PC-9 (cell line): ENCODE measurements at regions of chr2 and their contacts with region 1.

Region 1: DNA sequence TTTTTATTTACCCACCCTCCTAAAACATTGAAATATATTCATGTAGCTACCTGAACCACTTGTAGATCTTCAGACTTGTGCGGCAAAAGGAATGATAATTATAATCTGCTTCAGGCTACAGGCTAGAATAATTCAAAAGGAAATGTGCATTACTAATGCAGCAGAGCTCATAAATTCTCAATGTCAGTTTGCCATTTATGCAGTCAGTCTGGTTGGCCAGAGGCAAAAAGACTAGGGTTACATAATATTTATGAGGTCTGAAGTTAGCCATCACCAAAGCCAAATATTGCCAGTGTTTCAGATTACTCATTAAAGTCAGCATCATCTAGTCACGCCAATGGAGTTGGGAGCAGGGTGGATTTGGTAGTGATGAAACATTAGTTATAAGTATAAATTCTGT is 38.9 kb downstream of the METAP1D start:
- DNase-seq: peak in 1 of 2 experiments; percentile 96
- H3K4me3 ChIP-seq: no peak overlapping the region
- H3K27ac ChIP-seq: peak overlapping the region; percentile 33; the same call in 1 of the 2 replicates
- H3K4me1 ChIP-seq: peaks cover 20% of the 10 kb centered on the region
- H3K27me3 ChIP-seq: no peaks in the 10 kb centered on the region
- CTCF ChIP-seq: no peak

Region 2: DNA sequence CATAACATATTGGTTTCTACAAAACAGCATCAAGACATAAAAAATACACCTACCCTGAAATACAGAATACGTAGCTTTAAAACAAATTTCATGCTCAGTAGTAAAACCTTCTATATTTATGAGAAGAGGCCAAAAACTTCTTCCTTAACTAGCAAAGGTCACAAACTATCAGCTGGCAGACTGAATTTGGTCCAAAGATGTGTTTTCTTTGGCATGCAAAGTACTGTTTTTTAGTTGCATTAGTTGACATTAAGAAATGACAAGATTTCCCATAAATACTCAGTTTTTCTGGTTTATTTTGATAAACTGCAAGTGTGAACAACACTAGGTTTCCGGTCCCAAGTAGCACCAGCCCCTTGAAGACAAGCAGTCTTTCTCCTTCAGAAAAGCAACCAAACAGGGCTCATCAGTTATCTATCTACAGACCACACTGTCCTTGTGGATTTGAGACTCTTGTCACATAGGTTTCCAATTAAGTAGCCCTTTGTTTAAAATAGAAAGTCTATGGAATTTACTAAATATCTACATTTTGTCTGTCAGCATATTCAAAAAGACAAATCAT is 180.1 kb before region 1 on chr2:
- CTCF ChIA-PET with region 1: no interaction called
- POLR2A ChIA-PET with region 1: interaction called, 11 read pairs
- intact Hi-C with region 1: no loop called
- DNase-seq: no peak
- H3K4me3 ChIP-seq: no peak overlapping the region
- H3K27ac ChIP-seq: no peak overlapping the region
- H3K4me1 ChIP-seq: no peaks in the 10 kb centered on the region
- H3K27me3 ChIP-seq: no peaks in the 10 kb centered on the region
- CTCF ChIP-seq: no peak